Prostate gland (tissue), 2 donors: ENCODE measurements at regions of chr17 and their contacts with region 1.

Region 1: GRCh38 chr17:73192894-73193701 is at the start of gene COG1:
- DNase-seq: peak; percentile 71
- H3K4me3 ChIP-seq: peak within 1 kb of the TSS; percentile 74 to 98
- H3K27ac ChIP-seq: peak within 1 kb of the TSS; percentile 84 to 87
- H3K4me1 ChIP-seq: peaks cover 12% of the 10 kb centered on the region
- H3K27me3 ChIP-seq: no peaks in the 10 kb centered on the region
- CTCF ChIP-seq: no peak
- POLR2A ChIP-seq: peak; percentile 55
- total RNA-seq, gene COG1: 34.6 to 52.5 TPM

Region 2: DNA sequence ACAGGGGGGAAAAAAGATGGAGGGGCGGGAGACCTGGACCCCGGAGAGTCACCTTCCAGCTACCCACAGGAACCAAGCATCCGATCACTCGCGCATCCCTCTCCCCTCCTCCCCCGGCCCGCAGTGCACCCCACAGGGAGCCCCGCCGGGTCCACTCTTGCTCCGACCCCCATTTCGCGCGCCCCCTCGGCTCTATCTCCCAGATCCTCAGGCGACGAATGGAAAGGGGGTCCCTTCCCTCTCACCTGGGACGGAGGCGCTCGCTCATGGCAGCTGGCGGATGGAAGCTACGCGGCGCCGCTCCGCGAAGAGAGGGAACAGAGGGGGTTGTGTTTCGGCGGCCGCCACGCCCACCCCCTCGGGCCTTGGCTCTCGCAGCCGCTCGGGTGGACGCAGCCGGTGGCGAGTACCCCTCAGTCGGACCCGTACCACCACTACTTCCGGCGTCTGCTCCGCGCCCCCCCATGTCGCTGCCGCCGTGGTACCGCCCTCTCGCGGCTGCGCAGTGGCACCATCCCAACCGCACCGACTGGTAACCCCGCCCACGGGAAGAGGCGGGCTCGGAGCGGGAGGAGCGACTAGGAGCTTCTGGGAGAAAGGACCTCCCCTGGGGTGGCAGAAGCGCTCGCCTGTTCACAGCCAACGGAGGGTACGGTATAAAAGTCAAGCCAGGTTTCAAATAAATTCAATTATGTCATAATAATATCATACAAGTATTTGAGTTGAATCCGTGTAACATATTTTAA is 38.9 kb after region 1 on chr17:
- intact Hi-C with region 1: loop called (anchors 5 kb)
- DNase-seq: peak; percentile 94
- H3K4me3 ChIP-seq: peak overlapping the region; percentile 76 to 99
- H3K27ac ChIP-seq: peak overlapping the region; percentile 82 to 87
- H3K4me1 ChIP-seq: peaks cover 4% of the 10 kb centered on the region
- H3K27me3 ChIP-seq: no peaks in the 10 kb centered on the region
- CTCF ChIP-seq: peak in 3 of 4 experiments; percentile 31 to 73 (median 63)
- POLR2A ChIP-seq: peak; percentile 92

Region 3: GRCh38 chr17:73247726-73248125 is 54.6 kb after region 1 on chr17:
- intact Hi-C with region 1: loop called (anchors 5 kb)
- DNase-seq: no peak
- H3K4me3 ChIP-seq: no peak overlapping the region
- H3K27ac ChIP-seq: no peak overlapping the region
- H3K4me1 ChIP-seq: no peaks in the 10 kb centered on the region
- H3K27me3 ChIP-seq: no peaks in the 10 kb centered on the region
- CTCF ChIP-seq: peak in 2 of 4 experiments; percentile 30 to 45
- POLR2A ChIP-seq: no peak

Region 4: GRCh38 chr17:73359987-73360410 is 166.9 kb after region 1 on chr17:
- intact Hi-C with region 1: loop called (anchors 10 kb)
- DNase-seq: peak; percentile 96
- H3K4me3 ChIP-seq: no peak overlapping the region
- H3K27ac ChIP-seq: peak overlapping the region; percentile 69 to 76
- H3K4me1 ChIP-seq: peaks cover 18% of the 10 kb centered on the region
- H3K27me3 ChIP-seq: no peaks in the 10 kb centered on the region
- CTCF ChIP-seq: peak in 3 of 4 experiments; percentile 24 to 69 (median 56)
- POLR2A ChIP-seq: peak; percentile 13